GM10248 (cell line): ENCODE measurements at regions of chr11 and their contacts with region 1.

Region 1: GRCh38 chr11:68297812-68298658 is 14.4 kb upstream of the LRP5 start:
- DNase-seq: peak; percentile 89
- CTCF ChIP-seq: peak; percentile 93

Region 2: GRCh38 chr11:68213555-68214174 is 84.4 kb before region 1 on chr11:
- CTCF ChIA-PET with region 1: interaction called, 45 read pairs
- POLR2A ChIA-PET with region 1: no interaction called
- DNase-seq: peak; percentile 87
- CTCF ChIP-seq: no peak

Region 3: GRCh38 chr11:68251765-68252164 is 46.3 kb before region 1 on chr11:
- CTCF ChIA-PET with region 1: interaction called, 197 read pairs
- POLR2A ChIA-PET with region 1: no interaction called
- DNase-seq: no peak
- CTCF ChIP-seq: no peak

Region 4: DNA sequence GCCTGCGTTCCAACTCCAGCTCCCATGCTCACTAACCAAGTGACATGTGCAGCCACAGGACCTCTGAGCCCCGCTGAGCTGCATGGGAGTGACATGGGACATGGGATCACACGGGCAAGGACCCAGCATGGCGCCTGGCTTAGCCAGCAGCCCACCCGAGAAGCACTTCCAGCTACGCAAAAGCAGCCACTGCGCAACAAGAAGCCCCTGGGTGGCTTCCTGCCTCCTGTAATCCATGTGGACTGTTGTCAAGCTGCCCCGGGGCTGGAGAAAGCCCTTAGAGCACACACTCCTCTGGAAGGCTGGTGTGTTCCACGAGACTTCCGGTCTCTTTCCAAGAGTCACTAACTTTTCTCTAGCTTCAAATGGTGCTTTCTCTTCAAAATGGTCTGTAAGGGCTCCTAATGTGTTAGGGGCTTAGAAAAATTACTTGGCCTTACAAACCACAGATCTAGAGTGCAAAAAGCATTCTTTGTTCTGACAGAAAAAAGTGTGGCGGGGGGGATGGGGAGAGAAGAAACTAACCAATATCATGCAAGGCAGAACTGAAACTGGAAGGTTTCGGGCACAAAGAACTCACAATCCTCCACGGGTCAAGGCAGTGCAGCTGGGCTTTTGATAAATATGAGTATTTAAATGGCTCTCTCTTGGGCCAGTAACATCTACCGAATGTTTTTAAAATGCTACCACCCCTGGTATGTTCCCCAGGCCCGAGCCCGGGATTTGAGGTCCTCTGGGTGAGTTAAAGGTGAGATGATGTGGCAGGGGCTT is 31.7 kb before region 1 on chr11:
- CTCF ChIA-PET with region 1: interaction called, 197 read pairs
- POLR2A ChIA-PET with region 1: no interaction called
- DNase-seq: peak; percentile 81
- CTCF ChIP-seq: no peak

Region 5: GRCh38 chr11:68282141-68282970 is 15.7 kb before region 1 on chr11:
- CTCF ChIA-PET with region 1: interaction called, 23 read pairs
- POLR2A ChIA-PET with region 1: no interaction called
- DNase-seq: peak; percentile 68
- CTCF ChIP-seq: no peak

Region 6: GRCh38 chr11:68312117-68312779 is 14.2 kb after region 1 on chr11 and contains the start of gene LRP5:
- CTCF ChIA-PET with region 1: interaction called, 34 read pairs
- POLR2A ChIA-PET with region 1: no interaction called
- DNase-seq: peak; percentile 68
- CTCF ChIP-seq: peak; percentile 16

Region 7: GRCh38 chr11:68430801-68431200 is 132.8 kb after region 1 on chr11:
- CTCF ChIA-PET with region 1: no interaction called
- POLR2A ChIA-PET with region 1: no interaction called
- DNase-seq: no peak
- CTCF ChIP-seq: no peak

Region 8: GRCh38 chr11:69760319-69760718 is 1462.3 kb after region 1 on chr11:
- CTCF ChIA-PET with region 1: no interaction called
- POLR2A ChIA-PET with region 1: no interaction called
- DNase-seq: no peak
- CTCF ChIP-seq: no peak